ENCODE measurements at regions of chr1 and their contacts with region 1.

Region 1: GRCh38 chr1:45550401-45551351 is at the start of gene AKR1A1:
- DNase-seq: peak; percentile 91
- H3K4me3 Mint-ChIP-seq: peak within 1 kb of the TSS; percentile 93
- H3K27ac Mint-ChIP-seq: peak within 1 kb of the TSS; percentile 78
- H3K4me1 Mint-ChIP-seq: peaks cover 28% of the 10 kb centered on the region
- H3K27me3 Mint-ChIP-seq: peaks cover 3% of the 10 kb centered on the region
- total RNA-seq, gene AKR1A1: 144 TPM

Region 2: DNA sequence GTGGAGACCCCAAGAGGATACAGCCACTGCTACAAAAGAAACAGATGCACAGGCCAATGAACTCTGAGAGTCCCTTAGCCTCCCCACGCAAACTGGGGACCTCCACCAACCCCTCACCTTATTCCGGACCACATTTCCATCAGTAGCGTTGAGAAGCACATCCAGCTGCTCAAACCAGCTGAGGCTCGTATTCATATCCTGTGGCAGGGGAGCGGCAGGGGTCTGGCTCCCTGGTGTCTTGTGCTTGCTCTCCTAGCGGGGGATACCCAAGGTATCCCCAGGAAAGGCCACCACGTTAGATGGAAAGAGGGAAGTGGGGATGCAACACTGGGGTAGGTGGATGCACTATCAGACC is 51.3 kb before region 1 on chr1:
- CTCF ChIA-PET with region 1: interaction called, 6 read pairs
- POLR2A ChIA-PET with region 1: interaction called, 17 read pairs
- DNase-seq: peak; percentile 40
- H3K4me3 Mint-ChIP-seq: peak overlapping the region; percentile 88
- H3K27ac Mint-ChIP-seq: peak overlapping the region; percentile 77
- H3K4me1 Mint-ChIP-seq: peaks cover 36% of the 10 kb centered on the region
- H3K27me3 Mint-ChIP-seq: no peaks in the 10 kb centered on the region

Region 3: DNA sequence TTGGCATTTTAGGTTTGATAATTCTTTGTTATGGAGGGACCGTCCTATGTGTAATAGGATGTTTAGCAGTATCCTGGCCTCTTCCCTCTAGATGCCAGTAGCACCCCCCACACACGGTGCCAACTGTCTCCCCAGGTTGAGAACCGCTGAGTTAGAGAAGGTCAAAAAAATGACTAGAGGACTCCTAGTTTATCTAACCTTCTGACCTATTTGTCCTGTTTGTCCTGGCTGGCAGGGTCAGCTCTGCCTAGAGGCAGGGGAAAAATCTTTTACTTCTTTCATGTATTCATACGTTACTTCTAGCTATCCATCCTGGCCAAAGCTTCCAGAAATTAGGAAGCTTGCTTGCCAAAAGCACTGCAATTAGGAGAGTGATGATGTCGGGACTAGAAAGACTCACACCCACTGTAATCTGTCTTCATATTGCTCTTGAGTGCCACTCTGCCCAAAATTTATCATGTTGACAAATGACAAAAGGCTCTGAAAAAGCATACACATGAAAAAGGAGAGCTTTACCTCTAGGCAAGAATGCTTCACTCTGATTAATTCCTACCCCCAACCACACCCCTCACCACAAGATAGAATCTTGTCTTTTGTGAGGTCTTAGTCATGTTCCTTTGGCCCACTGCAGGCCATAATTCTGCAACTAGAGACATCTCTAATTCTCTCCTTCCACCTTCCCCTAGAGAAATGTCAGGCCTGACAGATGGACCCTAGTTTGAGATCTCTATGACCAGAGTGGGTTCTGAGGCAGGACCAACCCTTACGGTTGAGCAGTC is 14.5 kb before region 1 on chr1:
- CTCF ChIA-PET with region 1: interaction called, 4 read pairs
- POLR2A ChIA-PET with region 1: interaction called, 13 read pairs
- DNase-seq: no peak
- H3K4me3 Mint-ChIP-seq: no peak overlapping the region
- H3K27ac Mint-ChIP-seq: no peak overlapping the region
- H3K4me1 Mint-ChIP-seq: peaks cover 21% of the 10 kb centered on the region
- H3K27me3 Mint-ChIP-seq: peaks cover 3% of the 10 kb centered on the region

Region 4: DNA sequence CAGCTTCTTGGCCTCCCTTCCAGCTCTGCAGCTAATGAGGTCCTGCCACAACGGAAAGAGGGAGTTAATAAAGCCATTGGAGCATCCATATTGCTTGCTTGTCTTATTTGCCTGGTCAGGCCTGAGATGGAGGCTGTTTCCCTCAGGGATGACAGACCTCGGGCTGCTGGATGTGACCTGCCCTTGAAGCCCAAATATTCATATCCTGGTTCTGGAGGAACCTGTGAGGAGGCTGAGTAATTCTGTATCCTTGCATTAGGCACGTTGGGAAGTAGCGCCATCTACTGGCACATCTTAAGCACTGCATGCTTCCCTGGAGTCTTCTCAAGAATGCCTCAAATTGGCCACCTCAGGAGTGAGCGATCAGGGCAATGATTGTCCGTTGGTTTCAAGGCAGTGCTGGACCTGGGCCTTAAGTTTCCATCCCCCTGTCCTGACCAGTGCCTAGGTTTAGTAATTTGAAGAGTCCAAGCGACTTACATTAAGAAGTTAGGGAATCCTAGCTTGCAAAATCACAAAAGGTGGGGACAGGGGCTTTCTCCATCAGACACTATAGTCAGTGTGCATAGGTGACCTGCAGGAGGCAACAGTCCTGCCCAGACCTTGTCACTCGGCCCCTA is 19.4 kb after region 1 on chr1:
- CTCF ChIA-PET with region 1: interaction called, 11 read pairs
- POLR2A ChIA-PET with region 1: interaction called, 16 read pairs
- DNase-seq: peak; percentile 79
- H3K4me3 Mint-ChIP-seq: no peak overlapping the region
- H3K27ac Mint-ChIP-seq: no peak overlapping the region
- H3K4me1 Mint-ChIP-seq: no peaks in the 10 kb centered on the region
- H3K27me3 Mint-ChIP-seq: no peaks in the 10 kb centered on the region